ENCODE measurements at regions of chr18 and their contacts with region 1.

Region 1: GRCh38 chr18:21600526-21601410 is at the start of gene ESCO1:
- DNase-seq: peak; percentile 98
- H3K4me3 ChIP-seq: peak within 1 kb of the TSS; percentile 87
- H3K27ac ChIP-seq: peak within 1 kb of the TSS; percentile 92
- H3K4me1 ChIP-seq: peaks cover 34% of the 10 kb centered on the region
- CTCF ChIP-seq: peak; percentile 75
- total RNA-seq, gene ESCO1: 22.1 and 25.3 TPM in 2 replicates

Region 2: DNA sequence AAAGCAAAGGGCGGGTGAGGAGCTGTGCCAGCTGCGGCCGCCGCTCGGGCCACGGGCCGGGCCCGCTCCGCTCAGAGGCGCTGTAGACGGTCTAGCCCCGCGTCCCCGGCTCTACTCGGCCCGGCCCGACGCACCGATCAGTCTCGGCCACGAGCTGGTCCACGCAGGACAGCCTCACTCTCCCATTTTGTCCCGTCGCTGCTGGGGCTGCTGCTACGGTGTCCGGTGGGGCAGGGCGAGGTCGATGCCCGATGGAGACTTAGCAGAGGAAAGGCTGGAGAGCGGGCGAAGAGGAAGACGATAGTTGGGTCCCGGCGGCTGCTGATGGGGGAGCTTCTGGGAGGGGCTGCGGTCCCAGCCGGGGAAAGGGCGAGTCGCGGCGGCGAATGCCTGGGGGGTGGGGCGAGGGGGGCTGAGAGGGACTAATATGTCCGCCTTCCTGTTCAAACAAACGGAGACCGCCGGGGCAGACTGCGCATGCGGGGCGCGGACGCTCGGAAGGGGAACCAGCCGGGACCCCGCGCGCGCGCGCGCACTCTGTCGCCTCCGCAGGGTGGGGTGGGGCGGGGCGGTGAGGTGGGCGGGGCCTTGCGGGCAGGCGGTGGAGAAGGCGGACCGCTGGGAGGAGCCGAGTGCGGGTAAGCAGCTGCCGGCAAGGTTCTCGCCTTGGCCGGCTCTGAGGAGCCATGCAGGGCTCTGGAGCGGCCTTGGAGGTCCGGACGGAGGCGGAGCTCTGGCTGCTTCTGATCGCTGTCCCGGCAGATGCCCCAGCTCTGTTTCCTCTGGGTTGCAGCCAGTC is 489.2 kb before region 1 on chr18 and contains the start of gene ROCK1:
- CTCF ChIA-PET with region 1: no interaction called
- POLR2A ChIA-PET with region 1: no interaction called
- intact Hi-C with region 1: loop called (anchors 10 kb)
- DNase-seq: peak; percentile 95
- H3K4me3 ChIP-seq: peak within 1 kb of the TSS; percentile 90
- H3K27ac ChIP-seq: peak within 1 kb of the TSS; percentile 89
- H3K4me1 ChIP-seq: peaks cover 30% of the 10 kb centered on the region
- CTCF ChIP-seq: no peak
- total RNA-seq, gene ROCK1: 43.2 and 48.5 TPM in 2 replicates

Region 3: GRCh38 chr18:21704603-21705364 is 104.0 kb after region 1 on chr18 and contains the start of gene ABHD3:
- CTCF ChIA-PET with region 1: no interaction called
- POLR2A ChIA-PET with region 1: interaction called, 5 read pairs
- intact Hi-C with region 1: loop called (anchors 5 kb)
- DNase-seq: peak; percentile 96
- H3K4me3 ChIP-seq: peak within 1 kb of the TSS; percentile 92
- H3K27ac ChIP-seq: peak within 1 kb of the TSS; percentile 95
- H3K4me1 ChIP-seq: peaks cover 44% of the 10 kb centered on the region
- CTCF ChIP-seq: peak; percentile 11; the same call in 1 of the 2 replicates
- total RNA-seq, gene ABHD3: 126 and 154 TPM in 2 replicates

Region 4: GRCh38 chr18:21760321-21760720 is 159.6 kb after region 1 on chr18:
- CTCF ChIA-PET with region 1: no interaction called
- POLR2A ChIA-PET with region 1: no interaction called
- intact Hi-C with region 1: no loop called
- DNase-seq: no peak
- H3K4me3 ChIP-seq: no peak overlapping the region
- H3K27ac ChIP-seq: no peak overlapping the region
- H3K4me1 ChIP-seq: no peaks in the 10 kb centered on the region
- CTCF ChIP-seq: no peak